CD4-positive, alpha-beta memory T cell (primary cell): ENCODE measurements at regions of chr2 and their contacts with region 1.

Region 1: GRCh38 chr2:231452799-231453508 is 11.3 kb downstream of the NCL start:
- DNase-seq: peak in 1 of 5 donors; percentile 15
- H3K4me3 ChIP-seq: no peak overlapping the region
- H3K4me3 Mint-ChIP-seq: no peak overlapping the region
- H3K27ac ChIP-seq: no peak overlapping the region
- H3K27ac Mint-ChIP-seq: peak overlapping the region in 6 of 7 donors; percentile 49 to 86 (median 68)
- H3K4me1 ChIP-seq: no peaks in the 10 kb centered on the region
- H3K4me1 Mint-ChIP-seq: peaks cover 2 to 17% (median 10%) of the 10 kb centered on the region in 4 donors
- H3K27me3 ChIP-seq: no peaks in the 10 kb centered on the region
- H3K27me3 Mint-ChIP-seq: no peaks in the 10 kb centered on the region

Region 2: GRCh38 chr2:230824406-230824978 is 628.5 kb before region 1 on chr2:
- CTCF ChIA-PET with region 1: interaction called, 5 read pairs
- POLR2A ChIA-PET with region 1: no interaction called
- intact Hi-C with region 1: loop called (anchors 5 kb)
- DNase-seq: peak; percentile 60 to 74 (median 71)
- H3K4me3 ChIP-seq: no peak overlapping the region
- H3K4me3 Mint-ChIP-seq: peak overlapping the region in 7 of 8 donors; percentile 35 to 69 (median 60)
- H3K27ac ChIP-seq: no peak overlapping the region
- H3K27ac Mint-ChIP-seq: peak overlapping the region in 1 of 7 donors; percentile 68
- H3K4me1 ChIP-seq: peaks cover 16% of the 10 kb centered on the region
- H3K4me1 Mint-ChIP-seq: peaks cover 2 to 13% (median 8%) of the 10 kb centered on the region in 4 donors
- H3K27me3 ChIP-seq: no peaks in the 10 kb centered on the region
- H3K27me3 Mint-ChIP-seq: peaks cover 22 to 23% of the 10 kb centered on the region in 2 donors

Region 3: DNA sequence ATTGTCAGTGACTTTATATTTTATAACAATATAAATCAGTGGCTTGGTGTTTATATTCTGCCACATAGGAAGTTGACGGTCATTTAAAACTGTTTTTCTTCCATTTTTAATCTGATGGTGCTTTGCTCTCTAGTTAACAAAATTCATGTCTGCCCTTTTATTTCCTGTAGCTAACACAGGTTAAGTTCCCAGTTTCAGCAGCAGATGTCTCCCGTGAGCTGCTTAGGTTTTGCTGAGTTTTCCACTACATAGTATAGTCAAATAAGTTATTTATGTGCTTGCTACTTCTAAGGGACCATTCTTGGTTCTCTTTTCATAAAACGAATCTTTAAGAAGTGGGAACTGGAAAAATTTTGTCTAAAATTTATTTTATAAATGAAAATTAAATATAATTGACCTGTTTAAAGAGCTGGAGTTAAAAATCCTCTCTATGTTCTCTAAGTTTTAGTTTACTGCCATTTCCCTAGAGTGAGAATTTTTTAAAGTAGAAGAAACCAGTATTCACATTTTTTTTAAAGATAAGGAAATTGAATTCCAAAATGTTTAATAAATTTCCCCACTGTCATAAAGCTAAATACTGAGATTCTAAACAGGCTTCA is 348.7 kb before region 1 on chr2:
- CTCF ChIA-PET with region 1: interaction called, 64 read pairs
- POLR2A ChIA-PET with region 1: interaction called, 22 read pairs
- intact Hi-C with region 1: loop called (anchors 1 kb)
- DNase-seq: peak; percentile 35 to 54 (median 48)
- H3K4me3 ChIP-seq: no peak overlapping the region
- H3K4me3 Mint-ChIP-seq: no peak overlapping the region
- H3K27ac ChIP-seq: no peak overlapping the region
- H3K27ac Mint-ChIP-seq: peak overlapping the region in 1 of 7 donors; percentile 6
- H3K4me1 ChIP-seq: no peaks in the 10 kb centered on the region
- H3K4me1 Mint-ChIP-seq: peaks cover 0 to 4% (median 2%) of the 10 kb centered on the region in 4 donors
- H3K27me3 ChIP-seq: no peaks in the 10 kb centered on the region
- H3K27me3 Mint-ChIP-seq: no peaks in the 10 kb centered on the region

Region 4: DNA sequence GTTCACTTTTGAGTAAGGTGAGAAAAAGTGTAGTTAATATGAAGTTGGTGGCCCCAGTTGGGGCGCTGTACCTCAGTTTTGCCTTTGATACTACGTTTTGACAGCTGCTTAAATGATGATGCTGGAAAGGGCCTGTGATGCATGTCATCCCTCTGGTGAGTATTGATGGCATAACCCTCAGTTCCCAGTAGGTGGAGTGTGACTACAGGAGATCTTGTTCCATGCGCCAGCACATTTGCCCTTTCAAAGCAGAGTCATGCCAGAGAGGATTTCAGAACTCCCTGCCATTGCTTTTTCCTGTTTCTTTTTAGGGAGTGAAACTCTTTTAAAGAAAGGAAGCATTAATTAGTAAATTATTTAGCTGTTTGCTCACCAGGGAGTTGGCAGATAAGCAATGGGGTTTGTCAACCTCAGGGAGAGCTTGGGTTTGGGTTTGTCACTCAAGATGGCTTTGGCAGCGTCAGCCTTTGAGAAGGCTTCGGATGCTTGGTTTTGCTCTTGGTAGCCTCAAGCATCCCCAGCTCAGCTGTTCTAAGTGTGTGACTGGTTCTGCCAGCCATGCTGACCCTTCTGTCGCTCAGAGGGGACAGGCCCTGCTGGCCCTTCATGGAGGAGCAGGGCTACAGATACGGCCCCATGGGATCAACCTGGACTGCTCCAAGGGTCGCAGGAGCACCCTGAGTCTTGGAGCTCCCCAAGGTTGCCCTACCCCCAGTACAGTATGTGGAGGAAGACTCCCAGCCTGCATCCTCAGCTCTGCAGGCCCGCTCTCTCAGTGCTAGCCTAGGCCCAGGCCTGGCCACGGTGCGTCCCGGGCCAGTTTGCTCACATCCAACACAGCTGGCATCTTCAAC is 225.4 kb before region 1 on chr2:
- CTCF ChIA-PET with region 1: interaction called, 56 read pairs
- POLR2A ChIA-PET with region 1: interaction called, 3 read pairs
- intact Hi-C with region 1: no loop called
- DNase-seq: peak; percentile 44 to 58 (median 50)
- H3K4me3 ChIP-seq: no peak overlapping the region
- H3K4me3 Mint-ChIP-seq: no peak overlapping the region
- H3K27ac ChIP-seq: no peak overlapping the region
- H3K27ac Mint-ChIP-seq: no peak overlapping the region
- H3K4me1 ChIP-seq: no peaks in the 10 kb centered on the region
- H3K4me1 Mint-ChIP-seq: no peaks in the 10 kb centered on the region
- H3K27me3 ChIP-seq: no peaks in the 10 kb centered on the region
- H3K27me3 Mint-ChIP-seq: no peaks in the 10 kb centered on the region

Region 5: GRCh38 chr2:231245253-231246094 is 207.5 kb before region 1 on chr2:
- CTCF ChIA-PET with region 1: interaction called, 13 read pairs
- POLR2A ChIA-PET with region 1: no interaction called
- intact Hi-C with region 1: loop called (anchors 5 kb)
- DNase-seq: no peak
- H3K4me3 ChIP-seq: no peak overlapping the region
- H3K4me3 Mint-ChIP-seq: no peak overlapping the region
- H3K27ac ChIP-seq: no peak overlapping the region
- H3K27ac Mint-ChIP-seq: no peak overlapping the region
- H3K4me1 ChIP-seq: no peaks in the 10 kb centered on the region
- H3K4me1 Mint-ChIP-seq: no peaks in the 10 kb centered on the region
- H3K27me3 ChIP-seq: no peaks in the 10 kb centered on the region
- H3K27me3 Mint-ChIP-seq: no peaks in the 10 kb centered on the region

Region 6: GRCh38 chr2:231297108-231297908 is 155.6 kb before region 1 on chr2:
- CTCF ChIA-PET with region 1: interaction called, 14 read pairs
- POLR2A ChIA-PET with region 1: no interaction called
- intact Hi-C with region 1: loop called (anchors 1 kb)
- DNase-seq: peak in 3 of 5 donors; percentile 4 to 5 (median 4)
- H3K4me3 ChIP-seq: no peak overlapping the region
- H3K4me3 Mint-ChIP-seq: no peak overlapping the region
- H3K27ac ChIP-seq: no peak overlapping the region
- H3K27ac Mint-ChIP-seq: no peak overlapping the region
- H3K4me1 ChIP-seq: no peaks in the 10 kb centered on the region
- H3K4me1 Mint-ChIP-seq: no peaks in the 10 kb centered on the region
- H3K27me3 ChIP-seq: no peaks in the 10 kb centered on the region
- H3K27me3 Mint-ChIP-seq: peaks cover 3 to 4% of the 10 kb centered on the region in 2 donors

Region 7: DNA sequence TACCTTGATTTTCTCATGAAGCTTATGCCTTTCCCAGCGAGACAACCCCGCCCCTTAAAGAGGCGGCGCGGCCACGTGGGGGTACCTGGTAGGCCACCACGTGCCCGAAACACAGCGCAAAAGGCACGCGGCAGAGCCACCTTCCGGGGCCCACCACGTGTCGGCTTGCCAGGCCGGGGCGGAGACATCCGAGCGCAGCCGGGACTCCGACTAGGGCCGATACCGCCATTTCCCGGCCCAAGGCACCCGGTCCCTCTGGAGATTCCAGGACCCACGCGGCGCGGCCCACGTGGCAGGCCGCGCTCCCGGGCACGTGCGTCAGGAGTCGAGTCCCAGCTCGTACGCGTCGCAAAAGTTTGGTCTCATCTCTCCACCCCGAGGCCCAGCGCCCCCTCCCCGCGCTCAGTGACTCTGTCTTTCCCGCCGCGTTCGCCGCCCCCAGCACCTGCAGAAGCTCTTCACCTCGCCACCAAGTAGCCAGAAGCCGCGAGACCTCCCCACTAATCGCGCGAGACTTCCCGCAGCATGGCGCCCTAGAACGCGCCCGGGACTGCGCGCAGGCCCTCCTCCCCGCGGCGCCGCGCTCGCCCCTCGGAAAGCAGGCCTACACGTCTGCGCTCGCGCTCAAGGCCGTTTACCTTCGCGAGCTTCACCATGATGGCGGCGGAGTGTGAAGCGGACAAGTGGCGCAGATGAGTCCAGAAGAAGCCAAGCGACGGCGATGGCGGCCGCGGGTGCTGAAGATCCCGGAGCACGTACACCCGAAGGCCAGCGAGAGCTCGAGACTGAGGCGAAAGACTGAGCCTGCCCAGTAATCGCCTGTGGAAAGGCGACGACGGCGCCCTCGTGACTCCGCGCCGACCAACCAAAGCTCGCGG is 11.0 kb after region 1 on chr2 and contains the start of gene NCL:
- CTCF ChIA-PET with region 1: interaction called, 13 read pairs
- POLR2A ChIA-PET with region 1: interaction called, 99 read pairs
- intact Hi-C with region 1: loop called (anchors 1 kb)
- DNase-seq: peak; percentile 90 to 96 (median 92)
- H3K4me3 ChIP-seq: peak within 1 kb of the TSS; percentile 77 to 92
- H3K4me3 Mint-ChIP-seq: peak within 1 kb of the TSS; percentile 92 to 98 (median 96)
- H3K27ac ChIP-seq: peak within 1 kb of the TSS; percentile 96
- H3K27ac Mint-ChIP-seq: peak within 1 kb of the TSS; percentile 99 to 100 (median 99)
- H3K4me1 ChIP-seq: peaks cover 51% of the 10 kb centered on the region
- H3K4me1 Mint-ChIP-seq: peaks cover 31 to 59% (median 45%) of the 10 kb centered on the region in 4 donors
- H3K27me3 ChIP-seq: no peaks in the 10 kb centered on the region
- H3K27me3 Mint-ChIP-seq: peaks cover 0 to 3% of the 10 kb centered on the region in 2 donors
- total RNA-seq, gene NCL: 380 to 390 TPM